Aorta (tissue), 5 donors: ENCODE measurements at regions of chr16 and their contacts with region 1.

Region 1: DNA sequence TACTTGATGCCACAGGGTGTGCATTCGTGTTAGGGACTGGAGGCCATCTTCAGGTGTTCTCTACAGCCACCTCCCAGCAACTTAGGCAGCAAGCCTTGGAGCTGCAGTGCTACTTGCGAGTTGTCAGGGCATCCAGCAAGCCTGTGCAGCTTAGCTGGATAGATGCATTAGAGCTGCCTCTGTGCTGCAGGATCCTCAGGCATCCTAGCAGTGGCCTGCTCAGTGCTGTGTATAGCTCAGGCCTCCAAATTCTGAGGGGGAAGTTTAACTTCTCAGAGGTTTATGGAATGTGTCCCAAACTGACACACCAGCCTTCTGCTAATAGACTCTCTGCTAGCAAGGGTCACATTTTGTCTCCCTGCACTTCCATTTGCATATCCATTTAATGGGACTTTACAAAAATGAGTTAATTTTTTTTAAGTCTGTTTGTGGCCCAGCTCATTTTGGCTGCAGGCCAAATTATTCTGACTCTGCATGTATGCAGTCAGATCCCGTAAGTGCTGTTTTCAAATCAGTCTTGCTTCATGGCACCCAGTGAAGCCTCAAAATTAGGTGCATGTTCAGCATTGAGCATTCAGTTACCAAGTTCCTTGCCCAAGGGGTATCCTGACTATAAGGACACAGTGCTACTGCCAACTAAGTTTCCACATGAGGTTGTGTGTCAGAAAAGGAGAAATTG is 6.8 kb downstream of the GABARAPL2 start:
- DNase-seq: no peak
- ATAC-seq: peak; percentile 47
- H3K4me3 ChIP-seq: no peak overlapping the region
- H3K27ac ChIP-seq: no peak overlapping the region
- H3K4me1 ChIP-seq: peaks cover 0 to 2% of the 10 kb centered on the region in 2 donors
- H3K27me3 ChIP-seq: no peaks in the 10 kb centered on the region

Region 2: DNA sequence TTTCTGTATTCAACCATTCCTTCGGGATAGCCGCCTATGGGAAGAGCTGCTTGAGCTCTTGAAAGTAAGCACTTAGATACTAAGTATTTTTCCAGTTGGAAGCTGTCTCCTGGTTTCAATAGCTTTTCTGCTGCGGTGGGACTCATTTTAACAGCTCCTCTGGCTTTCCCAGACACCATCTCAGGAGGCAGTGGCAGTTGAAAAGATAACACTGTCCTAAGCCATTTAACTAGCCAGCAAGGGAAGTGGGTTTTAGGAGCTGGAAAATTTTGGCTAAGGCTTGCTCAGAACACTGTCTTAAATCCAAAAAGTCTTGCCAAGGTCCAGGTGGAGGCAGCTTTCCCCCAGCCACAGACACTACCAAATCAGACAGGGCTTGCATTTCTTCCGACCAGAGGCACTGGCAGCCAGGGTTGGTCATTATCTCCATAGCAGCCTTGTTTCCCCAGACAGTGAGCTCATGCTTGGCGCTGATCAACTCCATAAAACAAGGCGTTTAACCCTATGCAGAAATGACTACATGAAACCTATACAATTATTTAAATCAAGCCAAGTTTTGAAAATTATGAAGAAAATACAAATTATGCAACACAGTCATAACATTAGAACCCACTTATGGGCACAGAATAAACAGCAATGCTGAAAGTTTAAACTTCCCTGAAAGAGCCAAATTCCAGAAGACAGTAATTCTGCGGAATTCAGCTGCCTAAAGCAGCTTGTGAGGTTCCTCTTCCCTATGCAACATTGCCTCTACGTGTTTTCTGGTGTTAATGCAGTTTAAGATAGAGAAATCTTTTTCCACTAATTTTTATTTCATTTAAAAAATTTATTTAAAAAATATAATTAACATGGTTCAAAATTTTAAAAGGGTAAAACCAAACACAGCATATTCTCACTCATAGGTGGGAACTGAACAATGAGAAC is 18.2 kb after region 1 on chr16:
- intact Hi-C with region 1: loop called in 1 of 2 experiments (anchors 1 kb)
- DNase-seq: peak; percentile 79 to 85
- ATAC-seq: peak; percentile 87
- H3K4me3 ChIP-seq: no peak overlapping the region
- H3K27ac ChIP-seq: peak overlapping the region; percentile 94 to 98
- H3K4me1 ChIP-seq: no peaks in the 10 kb centered on the region
- H3K27me3 ChIP-seq: no peaks in the 10 kb centered on the region